Mammary epithelial cell (primary cell): ENCODE measurements at regions of chr6 and their contacts with region 1.

Region 1: GRCh38 chr6:162099685-162100084 is 627.9 kb downstream of the PRKN start:
- DNase-seq: peak; percentile 92
- H3K4me3 ChIP-seq: no peak overlapping the region
- H3K27ac ChIP-seq: peak overlapping the region; percentile 87
- H3K4me1 ChIP-seq: peaks cover 12% of the 10 kb centered on the region
- H3K27me3 ChIP-seq: no peaks in the 10 kb centered on the region
- CTCF ChIP-seq: no peak

Region 2: DNA sequence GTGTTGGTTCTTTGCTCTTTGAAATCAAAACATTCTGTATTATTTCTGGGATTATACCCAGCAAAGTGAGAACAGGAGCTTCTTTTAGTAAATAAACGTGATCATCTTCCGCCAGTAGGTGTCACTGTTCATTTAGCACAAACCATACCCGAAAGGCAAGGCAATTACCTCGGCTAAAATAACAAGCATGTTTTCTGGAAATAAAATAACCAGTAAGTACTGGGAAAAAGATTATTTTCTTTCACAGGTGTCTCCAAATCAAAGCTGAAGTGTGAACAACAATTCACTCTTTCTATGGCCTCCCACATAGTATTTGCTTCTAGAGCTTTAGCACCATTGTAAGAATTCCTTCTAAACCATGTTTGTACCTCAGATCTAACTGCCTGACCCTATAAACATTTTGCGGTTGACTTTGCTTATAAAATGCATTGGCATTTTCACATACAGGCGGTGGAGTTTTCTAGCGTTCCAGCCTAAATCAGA is 681.2 kb before region 1 on chr6:
- CTCF ChIA-PET with region 1: no interaction called
- dilution Hi-C with region 1: no loop called
- in situ Hi-C with region 1: loop called in 1 of 2 experiments (anchors 25 kb)
- intact Hi-C with region 1: no loop called
- DNase-seq: peak; percentile 61
- H3K4me3 ChIP-seq: no peak overlapping the region
- H3K27ac ChIP-seq: no peak overlapping the region
- H3K4me1 ChIP-seq: peaks cover 3% of the 10 kb centered on the region
- H3K27me3 ChIP-seq: no peaks in the 10 kb centered on the region
- CTCF ChIP-seq: peak; percentile 60 to 67

Region 3: DNA sequence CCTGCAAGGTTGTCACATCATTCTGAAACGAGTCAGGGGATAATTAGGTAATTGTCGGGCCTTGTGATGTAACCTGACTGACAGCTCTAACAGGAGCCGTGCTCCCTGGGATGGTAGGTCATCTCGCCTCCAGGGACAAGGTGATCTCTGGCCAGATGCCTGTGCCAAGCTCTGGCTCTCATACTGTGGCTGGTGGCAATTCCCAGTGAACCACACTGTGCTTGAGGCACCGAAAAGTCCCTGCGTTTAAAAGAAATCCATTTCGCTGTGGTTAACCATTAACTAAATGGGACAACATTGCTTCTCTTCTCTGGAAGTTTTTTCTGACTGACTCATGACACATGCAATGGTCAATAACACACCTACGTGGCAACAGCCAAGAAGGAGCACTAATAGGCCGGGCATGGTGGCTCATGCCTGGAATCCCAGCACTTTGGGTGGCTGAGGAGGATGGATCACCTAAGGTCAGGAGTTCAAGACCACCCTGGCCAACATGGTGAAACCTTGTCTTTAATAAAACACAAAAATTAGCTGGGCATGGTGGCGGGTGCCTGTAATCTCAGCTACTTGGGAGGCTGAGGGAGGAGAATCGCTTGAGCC is 41.3 kb before region 1 on chr6:
- CTCF ChIA-PET with region 1: no interaction called
- dilution Hi-C with region 1: no loop called
- in situ Hi-C with region 1: no loop called
- intact Hi-C with region 1: no loop called
- DNase-seq: peak; percentile 93
- H3K4me3 ChIP-seq: no peak overlapping the region
- H3K27ac ChIP-seq: no peak overlapping the region
- H3K4me1 ChIP-seq: no peaks in the 10 kb centered on the region
- H3K27me3 ChIP-seq: no peaks in the 10 kb centered on the region
- CTCF ChIP-seq: no peak

Region 4: GRCh38 chr6:162124710-162125435 is 25.2 kb after region 1 on chr6:
- CTCF ChIA-PET with region 1: interaction called, 13 read pairs
- dilution Hi-C with region 1: no loop called
- in situ Hi-C with region 1: no loop called
- intact Hi-C with region 1: no loop called
- DNase-seq: no peak
- H3K4me3 ChIP-seq: no peak overlapping the region
- H3K27ac ChIP-seq: no peak overlapping the region
- H3K4me1 ChIP-seq: no peaks in the 10 kb centered on the region
- H3K27me3 ChIP-seq: no peaks in the 10 kb centered on the region
- CTCF ChIP-seq: no peak